ENCODE measurements at regions of chr2 and their contacts with region 1.

Region 1: GRCh38 chr2:102020596-102021181 is 28.9 kb downstream of the IL1R2 start:
- DNase-seq: peak; percentile 88
- H3K4me3 Mint-ChIP-seq: no peak overlapping the region
- H3K27ac Mint-ChIP-seq: no peak overlapping the region
- H3K4me1 Mint-ChIP-seq: peaks cover 11% of the 10 kb centered on the region
- H3K27me3 Mint-ChIP-seq: no peaks in the 10 kb centered on the region

Region 2: GRCh38 chr2:102005989-102006885 is 14.5 kb before region 1 on chr2:
- CTCF ChIA-PET with region 1: interaction called, 17 read pairs
- DNase-seq: peak; percentile 44
- H3K4me3 Mint-ChIP-seq: no peak overlapping the region
- H3K27ac Mint-ChIP-seq: no peak overlapping the region
- H3K4me1 Mint-ChIP-seq: peaks cover 5% of the 10 kb centered on the region
- H3K27me3 Mint-ChIP-seq: peaks cover 7% of the 10 kb centered on the region

Region 3: DNA sequence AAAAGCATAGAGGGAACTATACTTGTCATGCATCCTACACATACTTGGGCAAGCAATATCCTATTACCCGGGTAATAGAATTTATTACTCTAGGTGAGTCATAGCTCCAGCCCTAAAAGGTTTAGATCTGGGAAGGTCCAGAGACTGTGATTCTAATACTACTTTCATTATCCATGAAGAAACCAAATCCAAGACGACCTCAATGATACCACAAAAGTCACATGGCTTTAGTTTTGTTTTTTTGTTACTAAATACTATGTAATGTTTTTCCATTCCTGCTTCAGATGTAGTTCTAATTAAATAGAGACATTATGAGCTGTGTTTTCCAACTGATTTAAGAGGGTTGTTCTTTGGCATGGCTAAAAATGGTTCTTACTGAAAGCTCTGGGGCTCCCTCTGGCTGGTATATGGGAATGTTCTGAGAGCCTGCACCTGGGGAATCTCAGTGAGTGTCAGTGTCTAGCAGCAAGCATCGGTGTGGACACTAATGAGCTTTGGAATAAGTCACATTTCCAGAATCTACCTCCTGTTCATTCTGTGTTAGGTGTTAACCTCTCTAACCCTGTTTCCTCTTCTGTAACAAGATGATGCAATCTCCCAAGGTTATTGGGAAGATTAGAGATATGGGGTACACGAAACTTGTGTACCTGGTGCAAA is 145.6 kb after region 1 on chr2:
- CTCF ChIA-PET with region 1: interaction called, 14 read pairs
- DNase-seq: no peak
- H3K4me3 Mint-ChIP-seq: no peak overlapping the region
- H3K27ac Mint-ChIP-seq: no peak overlapping the region
- H3K4me1 Mint-ChIP-seq: peaks cover 5% of the 10 kb centered on the region
- H3K27me3 Mint-ChIP-seq: no peaks in the 10 kb centered on the region

Region 4: DNA sequence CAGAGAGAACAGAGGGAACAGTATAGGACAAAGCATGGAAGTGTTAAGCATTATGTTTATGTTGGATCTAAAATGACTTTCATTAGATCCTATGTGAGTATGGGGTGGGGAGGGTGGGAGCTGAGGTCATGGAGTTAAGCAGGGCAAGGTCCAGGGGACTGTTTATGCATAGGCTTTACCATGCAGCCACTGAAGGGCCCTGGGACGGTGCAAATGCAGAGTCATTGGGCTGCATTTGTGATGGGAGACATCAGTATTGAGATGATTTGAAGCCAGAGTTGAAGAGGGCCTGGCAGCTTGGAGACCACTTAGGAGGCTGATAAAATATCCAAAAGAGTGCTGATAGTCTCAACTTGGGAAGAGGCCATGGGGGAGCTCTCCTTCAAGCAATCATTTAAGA is 188.8 kb after region 1 on chr2:
- CTCF ChIA-PET with region 1: no interaction called
- DNase-seq: no peak
- H3K4me3 Mint-ChIP-seq: no peak overlapping the region
- H3K27ac Mint-ChIP-seq: no peak overlapping the region
- H3K4me1 Mint-ChIP-seq: no peaks in the 10 kb centered on the region
- H3K27me3 Mint-ChIP-seq: no peaks in the 10 kb centered on the region